Activated CD4-positive, alpha-beta memory T cell treated with anti-CD3 and anti-CD28 coated beads, Interleukin-2, amount 10 ng/mL, durations not matched to agents 7 days and 5 days (primary cell): ENCODE measurements at regions of chr9 and their contacts with region 1.

Region 1: GRCh38 chr9:36560857-36561221 is 11.9 kb upstream of the MELK start:
- DNase-seq: no peak
- H3K4me3 Mint-ChIP-seq: no peak overlapping the region
- H3K27ac Mint-ChIP-seq: no peak overlapping the region
- H3K4me1 Mint-ChIP-seq: peaks cover under 1% of the 10 kb centered on the region
- H3K27me3 Mint-ChIP-seq: peaks cover 2% of the 10 kb centered on the region

Region 2: DNA sequence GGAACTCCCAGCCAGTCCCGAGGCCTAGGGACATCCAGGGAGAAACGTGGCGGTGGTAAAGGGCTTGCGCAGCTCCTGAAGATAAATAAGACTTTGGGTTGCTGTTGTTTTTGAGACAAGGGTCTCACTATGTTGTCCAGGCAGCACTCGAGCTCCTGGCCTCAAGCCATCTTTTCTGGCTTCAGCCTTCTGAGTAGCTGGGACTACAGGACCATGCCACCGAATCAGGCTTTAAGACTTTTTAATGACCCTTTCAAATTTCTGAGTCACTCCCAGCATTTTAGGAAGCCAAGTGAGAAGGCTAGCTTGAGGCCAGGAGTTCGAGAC is 301.9 kb before region 1 on chr9:
- CTCF ChIA-PET with region 1: no interaction called
- POLR2A ChIA-PET with region 1: no interaction called
- DNase-seq: no peak
- H3K4me3 Mint-ChIP-seq: peak overlapping the region; percentile 98
- H3K27ac Mint-ChIP-seq: peak overlapping the region; percentile 87
- H3K4me1 Mint-ChIP-seq: peaks cover 22% of the 10 kb centered on the region
- H3K27me3 Mint-ChIP-seq: no peaks in the 10 kb centered on the region

Region 3: GRCh38 chr9:36400332-36401163 is 160.3 kb before region 1 on chr9:
- CTCF ChIA-PET with region 1: interaction called, 193 read pairs
- POLR2A ChIA-PET with region 1: interaction called, 4 read pairs
- DNase-seq: peak; percentile 92
- H3K4me3 Mint-ChIP-seq: peak overlapping the region; percentile 88
- H3K27ac Mint-ChIP-seq: peak overlapping the region; percentile 97
- H3K4me1 Mint-ChIP-seq: peaks cover 40% of the 10 kb centered on the region
- H3K27me3 Mint-ChIP-seq: no peaks in the 10 kb centered on the region

Region 4: DNA sequence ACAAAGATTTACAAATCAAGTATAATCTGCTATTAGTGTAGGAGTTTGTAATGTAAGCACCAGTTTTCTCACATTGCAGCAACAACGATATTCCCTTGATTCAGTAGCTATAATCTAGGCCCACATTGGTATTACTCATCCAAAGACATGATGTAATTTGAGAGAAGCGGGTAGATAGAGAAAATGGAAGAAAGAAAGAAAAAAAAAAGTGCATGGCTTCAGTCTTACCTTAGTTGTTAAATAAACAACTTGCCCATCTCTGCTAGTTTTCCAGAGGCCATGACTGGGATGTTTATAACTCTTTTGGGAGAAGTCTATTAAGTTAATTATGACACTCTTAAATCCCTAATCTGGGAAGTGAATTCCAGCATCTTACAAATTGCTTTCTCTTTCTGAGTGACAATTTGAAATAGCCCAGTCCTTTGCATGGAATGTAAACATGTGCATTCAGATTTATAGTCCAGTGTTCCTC is 14.6 kb after region 1 on chr9:
- CTCF ChIA-PET with region 1: no interaction called
- POLR2A ChIA-PET with region 1: no interaction called
- DNase-seq: no peak
- H3K4me3 Mint-ChIP-seq: peak overlapping the region; percentile 33
- H3K27ac Mint-ChIP-seq: peak overlapping the region; percentile 48
- H3K4me1 Mint-ChIP-seq: peaks cover 50% of the 10 kb centered on the region
- H3K27me3 Mint-ChIP-seq: no peaks in the 10 kb centered on the region